OCI-LY7 (cell line): ENCODE measurements at regions of chr15 and their contacts with region 1.

Region 1: DNA sequence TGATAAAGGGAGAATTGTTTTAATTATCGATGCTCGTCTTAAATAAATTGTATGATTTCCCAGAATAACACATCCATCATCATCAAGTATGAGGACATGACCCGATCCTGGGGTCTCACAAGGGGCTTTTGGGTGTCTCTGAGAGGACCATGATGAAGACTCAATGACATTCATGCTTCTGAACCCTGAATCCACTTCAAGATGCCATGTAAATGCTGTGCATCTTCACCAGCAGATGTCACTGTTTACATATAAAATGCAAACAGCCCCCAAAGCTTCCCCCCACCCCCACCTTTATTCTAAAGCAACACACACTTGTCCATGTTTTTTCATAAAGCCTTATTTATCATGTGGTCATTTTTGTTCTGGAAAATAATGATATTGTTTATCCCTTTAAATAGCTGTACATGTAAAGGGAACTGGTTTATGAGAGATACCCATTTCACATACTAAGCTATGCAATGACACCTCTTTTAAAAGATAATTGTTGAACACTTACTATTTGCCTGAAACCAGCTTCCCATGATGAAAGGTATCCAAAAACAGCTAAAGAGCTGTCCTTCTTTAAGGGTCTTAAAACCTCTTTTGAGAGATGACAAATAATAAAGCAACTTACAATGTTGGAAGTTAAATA is 69.7 kb upstream of the UBE3A start:
- DNase-seq: peak; percentile 56
- H3K4me3 ChIP-seq: no peak overlapping the region
- H3K27ac ChIP-seq: no peak overlapping the region
- H3K4me1 ChIP-seq: no peaks in the 10 kb centered on the region
- CTCF ChIP-seq: peak; percentile 90

Region 2: GRCh38 chr15:25208735-25209134 is 299.8 kb before region 1 on chr15:
- CTCF ChIA-PET with region 1: no interaction called
- POLR2A ChIA-PET with region 1: no interaction called
- intact Hi-C with region 1: loop called (anchors 10 kb)
- DNase-seq: no peak
- H3K4me3 ChIP-seq: no peak overlapping the region
- H3K27ac ChIP-seq: no peak overlapping the region
- H3K4me1 ChIP-seq: no peaks in the 10 kb centered on the region
- CTCF ChIP-seq: no peak

Region 3: GRCh38 chr15:25701721-25702465 is 193.4 kb after region 1 on chr15:
- CTCF ChIA-PET with region 1: no interaction called
- POLR2A ChIA-PET with region 1: no interaction called
- intact Hi-C with region 1: loop called (anchors 10 kb)
- DNase-seq: no peak
- H3K4me3 ChIP-seq: no peak overlapping the region
- H3K27ac ChIP-seq: no peak overlapping the region
- H3K4me1 ChIP-seq: no peaks in the 10 kb centered on the region
- CTCF ChIP-seq: no peak

Region 4: GRCh38 chr15:26260517-26261133 is 752.1 kb after region 1 on chr15:
- CTCF ChIA-PET with region 1: no interaction called
- POLR2A ChIA-PET with region 1: no interaction called
- intact Hi-C with region 1: loop called (anchors 2 kb)
- DNase-seq: peak; percentile 51
- H3K4me3 ChIP-seq: no peak overlapping the region
- H3K27ac ChIP-seq: no peak overlapping the region
- H3K4me1 ChIP-seq: no peaks in the 10 kb centered on the region
- CTCF ChIP-seq: peak; percentile 81

Region 5: DNA sequence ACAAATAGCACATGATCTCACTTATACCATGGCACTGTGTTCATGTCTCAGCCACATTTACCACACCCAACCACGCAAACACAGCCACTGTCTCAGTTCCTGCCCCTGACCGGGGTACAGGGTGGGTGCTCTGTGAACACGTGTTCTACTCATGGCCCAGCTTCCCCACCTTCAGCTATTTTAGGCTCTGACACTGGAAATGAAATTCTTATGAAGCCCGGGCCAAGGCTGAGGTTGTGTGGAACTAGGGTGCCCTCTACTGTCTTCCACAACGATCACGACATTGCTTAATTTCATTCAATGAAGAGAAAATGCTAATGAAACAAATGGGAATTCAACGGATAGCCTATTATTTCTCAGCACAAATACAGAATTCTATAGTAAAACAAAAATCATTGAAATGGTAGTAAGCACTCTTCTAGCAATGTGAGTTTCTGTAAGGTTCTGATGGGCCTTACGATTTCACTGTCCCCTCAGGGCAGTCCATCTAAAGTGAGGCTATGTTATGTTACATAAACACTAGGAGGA is 1356.2 kb after region 1 on chr15:
- CTCF ChIA-PET with region 1: no interaction called
- POLR2A ChIA-PET with region 1: no interaction called
- intact Hi-C with region 1: loop called (anchors 10 kb)
- DNase-seq: peak; percentile 32
- H3K4me3 ChIP-seq: no peak overlapping the region
- H3K27ac ChIP-seq: no peak overlapping the region
- H3K4me1 ChIP-seq: no peaks in the 10 kb centered on the region
- CTCF ChIP-seq: peak; percentile 82